ENCODE measurements at regions of chr6 and their contacts with region 1.

Region 1: DNA sequence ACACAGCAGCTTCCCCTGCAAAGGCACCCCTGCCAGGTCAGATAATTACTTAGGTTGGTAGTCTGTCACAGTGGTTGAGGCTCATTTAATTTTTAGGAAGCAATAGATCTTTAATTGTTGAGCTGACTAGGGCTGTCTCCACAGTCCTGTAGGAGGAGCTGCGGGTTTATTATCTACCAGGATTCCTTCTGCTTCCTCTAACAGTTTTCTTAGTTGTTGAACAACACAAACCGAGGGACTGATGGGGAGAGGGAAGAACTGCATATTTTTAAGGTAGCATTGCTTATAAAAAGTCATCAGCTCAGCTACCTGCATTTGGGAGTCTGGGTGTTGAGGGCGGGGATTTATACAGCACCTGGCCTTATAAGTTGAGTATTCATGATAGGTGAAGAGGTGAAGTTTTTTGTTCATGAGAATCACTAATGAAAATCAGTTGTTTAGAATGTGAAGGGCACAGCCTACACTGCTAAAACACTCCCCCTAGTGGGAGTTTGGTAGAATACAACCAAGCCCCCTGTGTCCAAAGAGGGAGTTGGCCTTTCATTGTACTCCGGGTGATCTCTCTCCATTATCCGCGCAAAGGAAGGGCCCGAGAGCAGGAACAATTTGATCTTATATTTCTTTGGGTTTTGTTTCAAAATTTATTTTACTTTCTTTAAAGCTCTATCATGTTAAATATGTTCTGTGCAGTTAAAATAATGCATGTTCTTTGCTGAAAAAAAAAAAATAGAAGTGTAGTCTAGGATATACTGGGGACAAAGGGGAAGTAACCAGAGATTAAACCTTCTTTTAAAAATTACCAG is 69.6 kb downstream of the SSR1 start:
- DNase-seq: peak; percentile 58 to 69 (median 61)
- H3K4me3 ChIP-seq: no peak overlapping the region
- H3K4me3 Mint-ChIP-seq: no peak overlapping the region
- H3K27ac ChIP-seq: no peak overlapping the region
- H3K27ac Mint-ChIP-seq: peak overlapping the region; percentile 7 to 74 (median 37)
- H3K4me1 ChIP-seq: peaks cover 6% of the 10 kb centered on the region
- H3K4me1 Mint-ChIP-seq: peaks cover 8 to 21% (median 9%) of the 10 kb centered on the region in 4 donors
- H3K27me3 ChIP-seq: no peaks in the 10 kb centered on the region
- H3K27me3 Mint-ChIP-seq: no peaks in the 10 kb centered on the region

Region 2: DNA sequence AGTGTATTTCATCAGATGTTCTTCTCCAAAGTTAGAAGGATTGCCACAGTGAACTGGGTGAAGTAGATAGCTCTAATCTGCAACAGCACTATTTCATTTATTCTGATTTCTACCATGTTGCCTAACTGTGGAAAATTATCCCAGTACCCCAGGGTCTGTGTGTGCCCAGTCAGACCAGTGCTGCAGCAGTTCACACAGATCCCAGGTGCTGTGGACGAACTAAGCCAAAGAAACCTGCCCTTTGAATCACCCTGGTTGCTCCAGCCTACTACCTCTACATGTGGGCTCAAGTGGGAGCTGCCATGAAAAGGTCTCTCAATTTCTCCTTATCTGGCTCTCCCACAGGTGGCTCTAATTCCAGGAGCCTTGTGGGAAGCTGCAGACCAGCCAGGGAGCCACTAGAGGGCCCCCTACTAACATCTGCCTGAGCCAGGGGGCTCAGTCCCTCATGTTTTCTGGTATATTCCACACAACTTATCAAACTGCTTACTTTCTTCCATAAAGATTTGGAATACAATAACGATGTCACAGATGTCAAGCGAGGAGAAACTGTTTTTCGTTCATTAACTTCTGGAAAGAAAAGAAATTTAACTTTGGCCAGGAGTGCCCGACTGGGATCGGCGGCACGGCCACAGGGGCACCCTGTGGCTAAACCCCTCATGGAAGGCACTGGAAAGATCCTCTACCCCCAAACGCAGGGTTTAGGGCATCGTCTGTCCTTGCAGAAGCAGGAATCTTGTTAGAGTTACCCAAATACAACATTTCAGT is 686.5 kb before region 1 on chr6:
- CTCF ChIA-PET with region 1: no interaction called
- POLR2A ChIA-PET with region 1: no interaction called
- intact Hi-C with region 1: loop called (anchors 1 kb)
- DNase-seq: peak; percentile 26 to 53 (median 44)
- H3K4me3 ChIP-seq: no peak overlapping the region
- H3K4me3 Mint-ChIP-seq: no peak overlapping the region
- H3K27ac ChIP-seq: no peak overlapping the region
- H3K27ac Mint-ChIP-seq: peak overlapping the region in 3 of 7 donors; percentile 26 to 67 (median 34)
- H3K4me1 ChIP-seq: no peaks in the 10 kb centered on the region
- H3K4me1 Mint-ChIP-seq: peaks cover 1 to 6% (median 4%) of the 10 kb centered on the region in 4 donors
- H3K27me3 ChIP-seq: no peaks in the 10 kb centered on the region
- H3K27me3 Mint-ChIP-seq: peaks cover 1 to 4% of the 10 kb centered on the region in 2 donors

Region 3: DNA sequence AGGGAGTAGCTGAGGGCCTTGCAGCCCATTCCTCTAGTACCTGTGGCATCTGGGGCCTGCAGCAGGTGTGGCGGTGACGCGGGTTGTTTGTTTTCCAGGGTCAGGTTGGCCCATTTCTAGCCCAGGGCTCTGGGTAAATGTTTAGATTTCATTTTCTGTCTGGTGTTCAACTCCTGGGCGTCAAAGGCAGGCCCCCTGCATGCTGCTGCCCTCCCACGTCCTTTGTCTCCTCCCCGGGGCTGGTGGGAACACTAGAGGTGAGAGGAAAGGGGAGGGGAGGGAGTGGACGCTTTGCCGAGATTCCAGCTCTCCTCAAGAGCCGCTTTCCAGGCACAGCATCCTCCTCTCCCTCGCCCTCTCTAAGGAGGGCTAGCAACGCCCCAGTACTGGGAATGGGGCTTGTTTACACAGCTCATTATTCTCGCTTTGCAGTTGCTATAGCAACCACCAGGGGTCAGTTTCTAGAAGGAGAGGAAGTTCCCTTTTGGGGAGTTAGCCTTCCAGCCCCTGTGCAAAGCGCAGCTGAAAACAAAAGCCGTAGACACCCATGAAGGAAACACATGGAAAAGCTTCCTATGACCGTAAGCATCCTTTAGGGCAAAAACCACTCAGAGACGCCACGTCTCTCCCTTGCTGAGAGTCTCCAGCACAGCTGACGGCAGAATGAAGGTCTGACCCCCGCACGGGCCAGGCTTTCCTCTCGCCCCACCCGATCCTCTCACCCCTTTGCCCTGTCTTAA is 484.3 kb before region 1 on chr6:
- CTCF ChIA-PET with region 1: interaction called, 5 read pairs
- POLR2A ChIA-PET with region 1: no interaction called
- intact Hi-C with region 1: loop called (anchors 1 kb)
- DNase-seq: no peak
- H3K4me3 ChIP-seq: no peak overlapping the region
- H3K4me3 Mint-ChIP-seq: peak overlapping the region in 1 of 8 donors; percentile 4
- H3K27ac ChIP-seq: no peak overlapping the region
- H3K27ac Mint-ChIP-seq: peak overlapping the region in 1 of 7 donors; percentile 29
- H3K4me1 ChIP-seq: no peaks in the 10 kb centered on the region
- H3K4me1 Mint-ChIP-seq: no peaks in the 10 kb centered on the region
- H3K27me3 ChIP-seq: no peaks in the 10 kb centered on the region
- H3K27me3 Mint-ChIP-seq: peaks cover 6 to 12% of the 10 kb centered on the region in 2 donors

Region 4: DNA sequence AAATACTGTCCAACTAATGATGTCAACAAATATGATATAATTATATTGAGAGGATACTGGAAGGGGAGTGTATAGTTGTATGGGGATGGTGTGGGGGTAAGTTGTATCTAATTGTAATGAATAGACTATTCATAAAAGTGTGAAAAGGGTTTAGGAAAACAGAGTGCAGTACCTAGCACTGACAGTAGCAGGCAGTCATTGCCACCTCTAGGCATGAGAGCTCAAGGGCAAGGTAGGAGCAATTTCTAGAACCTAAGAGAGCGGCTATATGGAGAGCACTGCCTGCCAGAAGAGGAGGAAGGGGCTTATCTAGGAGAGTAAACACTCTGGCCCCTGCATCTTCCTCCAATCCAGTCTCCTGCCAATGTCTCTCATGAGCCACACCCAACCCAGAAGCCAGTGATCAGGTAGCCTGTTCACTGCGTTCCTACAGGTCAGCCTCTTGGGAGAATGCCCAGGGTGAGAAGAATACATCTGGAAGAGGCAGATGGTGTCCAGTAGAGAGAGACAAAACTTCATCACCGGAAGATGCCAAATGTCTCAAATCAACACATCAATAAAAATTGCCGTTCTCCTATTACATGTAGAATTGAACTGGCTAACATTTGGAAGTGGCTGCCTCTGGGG is 454.9 kb before region 1 on chr6:
- CTCF ChIA-PET with region 1: interaction called, 4 read pairs
- POLR2A ChIA-PET with region 1: no interaction called
- intact Hi-C with region 1: loop called (anchors 2 kb)
- DNase-seq: no peak
- H3K4me3 ChIP-seq: no peak overlapping the region
- H3K4me3 Mint-ChIP-seq: no peak overlapping the region
- H3K27ac ChIP-seq: no peak overlapping the region
- H3K27ac Mint-ChIP-seq: no peak overlapping the region
- H3K4me1 ChIP-seq: no peaks in the 10 kb centered on the region
- H3K4me1 Mint-ChIP-seq: peaks cover 0 to 2% (median 0%) of the 10 kb centered on the region in 4 donors
- H3K27me3 ChIP-seq: no peaks in the 10 kb centered on the region
- H3K27me3 Mint-ChIP-seq: no peaks in the 10 kb centered on the region

Region 5: DNA sequence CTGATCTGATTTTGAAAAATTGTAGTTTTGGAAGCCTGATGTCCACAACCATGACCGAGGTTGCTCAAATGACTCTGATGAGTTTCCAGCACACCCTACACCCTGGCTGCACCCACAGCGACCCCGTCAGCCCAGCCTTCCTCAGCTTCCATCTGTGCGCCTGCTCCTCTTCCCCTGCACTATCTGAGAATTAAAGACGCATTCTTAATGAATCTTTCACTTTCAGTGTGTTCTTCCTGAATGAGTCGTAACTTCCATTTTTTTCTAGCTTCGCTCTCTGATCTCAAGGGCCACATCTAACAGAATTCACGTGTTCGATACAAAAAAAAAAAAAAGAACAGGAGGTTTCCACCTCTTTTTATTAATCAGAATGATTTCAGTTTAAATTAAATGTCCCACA is 156.9 kb before region 1 on chr6:
- CTCF ChIA-PET with region 1: interaction called, 20 read pairs
- POLR2A ChIA-PET with region 1: no interaction called
- intact Hi-C with region 1: loop called (anchors 2 kb)
- DNase-seq: peak in 4 of 5 donors; percentile 47 to 56 (median 52)
- H3K4me3 ChIP-seq: peak overlapping the region; percentile 13 to 44
- H3K4me3 Mint-ChIP-seq: peak overlapping the region; percentile 72 to 97 (median 86)
- H3K27ac ChIP-seq: peak overlapping the region; percentile 17
- H3K27ac Mint-ChIP-seq: peak overlapping the region; percentile 76 to 96 (median 88)
- H3K4me1 ChIP-seq: peaks cover 25% of the 10 kb centered on the region
- H3K4me1 Mint-ChIP-seq: peaks cover 17 to 39% (median 24%) of the 10 kb centered on the region in 4 donors
- H3K27me3 ChIP-seq: no peaks in the 10 kb centered on the region
- H3K27me3 Mint-ChIP-seq: no peaks in the 10 kb centered on the region

Region 6: DNA sequence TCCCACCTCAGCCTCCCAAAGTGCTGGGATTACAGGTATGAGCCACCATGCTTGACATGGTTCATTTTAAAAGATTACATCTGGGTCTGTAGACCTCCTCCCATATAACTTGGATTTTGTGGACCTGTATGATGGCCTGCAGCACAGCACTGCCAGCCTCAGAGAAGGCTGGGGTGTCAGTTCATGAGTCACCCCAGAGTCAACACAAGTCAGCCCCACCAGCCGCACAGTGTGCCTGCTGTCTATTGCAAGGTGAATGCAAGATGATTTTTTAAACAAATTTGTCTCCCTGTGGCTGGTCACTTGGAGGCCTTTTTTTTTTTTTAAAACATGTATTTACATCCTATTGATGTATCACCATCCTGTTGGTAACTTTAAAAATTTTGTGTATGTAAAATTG is 58.9 kb before region 1 on chr6:
- CTCF ChIA-PET with region 1: no interaction called
- POLR2A ChIA-PET with region 1: no interaction called
- intact Hi-C with region 1: no loop called
- DNase-seq: no peak
- H3K4me3 ChIP-seq: no peak overlapping the region
- H3K4me3 Mint-ChIP-seq: no peak overlapping the region
- H3K27ac ChIP-seq: no peak overlapping the region
- H3K27ac Mint-ChIP-seq: peak overlapping the region in 2 of 7 donors; percentile 50 to 74
- H3K4me1 ChIP-seq: no peaks in the 10 kb centered on the region
- H3K4me1 Mint-ChIP-seq: peaks cover 0 to 5% (median 2%) of the 10 kb centered on the region in 4 donors
- H3K27me3 ChIP-seq: no peaks in the 10 kb centered on the region
- H3K27me3 Mint-ChIP-seq: no peaks in the 10 kb centered on the region

Region 7: GRCh38 chr6:7254980-7255835 is 11.8 kb after region 1 on chr6:
- CTCF ChIA-PET with region 1: interaction called, 12 read pairs
- POLR2A ChIA-PET with region 1: no interaction called
- intact Hi-C with region 1: no loop called
- DNase-seq: no peak
- H3K4me3 ChIP-seq: no peak overlapping the region
- H3K4me3 Mint-ChIP-seq: no peak overlapping the region
- H3K27ac ChIP-seq: no peak overlapping the region
- H3K27ac Mint-ChIP-seq: peak overlapping the region in 1 of 7 donors; percentile 7
- H3K4me1 ChIP-seq: no peaks in the 10 kb centered on the region
- H3K4me1 Mint-ChIP-seq: peaks cover 0 to under 1% (median under 1%) of the 10 kb centered on the region in 4 donors
- H3K27me3 ChIP-seq: no peaks in the 10 kb centered on the region
- H3K27me3 Mint-ChIP-seq: no peaks in the 10 kb centered on the region

Region 8: GRCh38 chr6:7674291-7674690 is 430.9 kb after region 1 on chr6:
- CTCF ChIA-PET with region 1: no interaction called
- POLR2A ChIA-PET with region 1: no interaction called
- intact Hi-C with region 1: no loop called
- DNase-seq: no peak
- H3K4me3 ChIP-seq: no peak overlapping the region
- H3K4me3 Mint-ChIP-seq: no peak overlapping the region
- H3K27ac ChIP-seq: no peak overlapping the region
- H3K27ac Mint-ChIP-seq: no peak overlapping the region
- H3K4me1 ChIP-seq: no peaks in the 10 kb centered on the region
- H3K4me1 Mint-ChIP-seq: no peaks in the 10 kb centered on the region
- H3K27me3 ChIP-seq: no peaks in the 10 kb centered on the region
- H3K27me3 Mint-ChIP-seq: peaks cover 10% of the 10 kb centered on the region in 2 donors

Measured in CD4-positive, alpha-beta memory T cell (primary cell).